ENCODE measurements at regions of chr4 and their contacts with region 1.

Region 1: DNA sequence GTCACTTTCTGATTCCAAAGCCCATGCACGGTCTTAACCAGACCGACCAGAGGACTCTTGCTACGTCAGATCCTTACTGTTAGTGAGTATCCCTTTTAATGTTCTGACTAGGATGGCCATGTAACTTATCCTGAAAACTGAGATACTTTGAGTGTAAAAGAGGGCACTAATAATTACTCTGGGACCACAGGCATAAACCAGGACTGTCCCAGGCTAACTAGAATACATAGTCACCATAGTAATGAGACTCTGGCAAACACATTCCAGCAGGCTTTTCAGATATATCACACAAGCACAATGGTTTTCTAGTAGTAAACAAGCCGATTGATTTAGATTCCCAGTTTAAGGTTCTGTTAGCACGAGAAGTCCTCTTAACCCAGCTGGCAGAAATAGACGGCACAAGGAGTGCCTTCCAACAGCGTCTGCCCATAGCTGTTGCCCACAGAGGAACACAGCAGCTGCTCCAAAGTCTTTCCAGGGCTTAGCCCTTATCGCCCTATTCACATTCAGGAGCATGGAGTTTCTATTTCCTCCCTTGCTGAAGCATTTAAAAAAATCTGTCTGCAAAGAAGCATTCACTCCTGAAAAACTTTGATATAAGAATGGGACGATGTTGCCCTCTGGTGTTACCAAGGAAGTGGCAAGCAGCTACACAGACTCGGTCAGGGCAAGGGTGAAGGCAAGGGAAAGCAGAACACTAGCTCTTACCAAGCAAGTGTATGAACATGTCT is 92.4 kb downstream of the CXCL13 start:
- DNase-seq: peak; percentile 29
- ATAC-seq: peak; percentile 71
- H3K4me3 ChIP-seq: no peak overlapping the region
- H3K27ac ChIP-seq: no peak overlapping the region
- H3K4me1 ChIP-seq: peaks cover 11 to 24% of the 10 kb centered on the region in 2 experiments; a peak in 3 of 4 replicates
- H3K27me3 ChIP-seq: peaks cover 5% of the 10 kb centered on the region; the same call in 1 of the 2 replicates
- CTCF ChIP-seq: peak; percentile 59 to 70 (median 65); a peak in 5 of 6 replicates
- POLR2A ChIP-seq: no peak
- RAD21 ChIP-seq: peak; percentile 78

Region 2: DNA sequence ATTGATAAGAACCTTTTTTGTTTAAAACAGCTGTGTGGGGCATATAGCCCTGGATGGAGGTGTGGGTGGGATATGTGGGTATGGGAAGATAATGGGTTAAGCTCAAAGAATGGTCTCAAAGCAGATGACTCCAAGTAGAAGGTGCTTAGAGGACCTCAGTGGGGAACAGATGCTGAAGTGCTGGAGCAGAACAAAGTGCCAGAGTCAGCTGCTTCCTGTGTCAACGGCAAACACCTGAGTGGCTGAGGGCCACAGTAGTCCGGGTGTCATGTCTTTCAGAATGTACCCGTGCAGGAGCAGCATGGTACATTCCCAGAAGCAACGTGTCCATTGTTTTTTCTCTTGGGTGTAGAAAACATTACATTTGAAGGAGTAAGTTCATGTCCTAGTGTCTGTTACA is 330.4 kb before region 1 on chr4:
- CTCF ChIA-PET with region 1: interaction called, 5 read pairs
- POLR2A ChIA-PET with region 1: no interaction called
- RAD21 ChIA-PET with region 1: no interaction called
- intact Hi-C with region 1: loop called (anchors 5 kb)
- DNase-seq: no peak
- ATAC-seq: no peak
- H3K4me3 ChIP-seq: no peak overlapping the region
- H3K27ac ChIP-seq: no peak overlapping the region
- H3K4me1 ChIP-seq: no peaks in the 10 kb centered on the region
- H3K27me3 ChIP-seq: no peaks in the 10 kb centered on the region; the same call in 1 of the 2 replicates
- CTCF ChIP-seq: no peak
- POLR2A ChIP-seq: no peak
- RAD21 ChIP-seq: no peak

Region 3: GRCh38 chr4:77465271-77465670 is 232.8 kb before region 1 on chr4:
- CTCF ChIA-PET with region 1: interaction called, 26 read pairs
- POLR2A ChIA-PET with region 1: no interaction called
- RAD21 ChIA-PET with region 1: interaction called in 1 of 2 experiments, 4 read pairs
- intact Hi-C with region 1: loop called (anchors 2 kb)
- DNase-seq: no peak
- ATAC-seq: peak; percentile 90
- H3K4me3 ChIP-seq: no peak overlapping the region
- H3K27ac ChIP-seq: no peak overlapping the region
- H3K4me1 ChIP-seq: no peaks in the 10 kb centered on the region
- H3K27me3 ChIP-seq: no peaks in the 10 kb centered on the region
- CTCF ChIP-seq: peak; percentile 57 to 62 (median 58); a peak in 5 of 6 replicates
- POLR2A ChIP-seq: no peak
- RAD21 ChIP-seq: peak; percentile 73

Region 4: DNA sequence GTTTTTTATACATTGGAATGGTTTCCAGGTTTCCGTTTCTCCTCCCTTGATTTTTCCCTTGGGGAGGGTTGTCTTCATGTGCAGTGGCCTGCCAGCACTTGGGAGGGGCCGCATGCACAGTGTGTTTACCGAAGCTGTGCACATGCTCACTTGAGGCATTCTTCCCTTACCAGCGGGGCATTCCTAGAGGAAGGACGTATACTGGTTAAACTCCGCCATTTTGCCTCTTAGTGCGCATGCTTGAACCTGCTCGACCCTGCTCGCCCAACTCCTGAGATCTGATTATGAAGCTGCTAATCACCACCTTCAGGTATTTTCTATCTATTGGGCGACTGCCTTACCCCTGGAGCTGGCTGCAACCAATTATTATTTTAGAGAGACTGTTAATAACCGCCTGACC is 16.2 kb before region 1 on chr4:
- CTCF ChIA-PET with region 1: no interaction called
- POLR2A ChIA-PET with region 1: no interaction called
- RAD21 ChIA-PET with region 1: no interaction called
- intact Hi-C with region 1: no loop called
- DNase-seq: no peak
- ATAC-seq: no peak
- H3K4me3 ChIP-seq: no peak overlapping the region
- H3K27ac ChIP-seq: no peak overlapping the region
- H3K4me1 ChIP-seq: no peaks in the 10 kb centered on the region
- H3K27me3 ChIP-seq: no peaks in the 10 kb centered on the region
- CTCF ChIP-seq: no peak
- POLR2A ChIP-seq: no peak
- RAD21 ChIP-seq: no peak

Measured in HCT116 (cell line).